WTC11 (cell line): ENCODE measurements at regions of chr16 and their contacts with region 1.

Region 1: GRCh38 chr16:86252596-86252995 is 257.7 kb upstream of the FOXF1 start:
- DNase-seq: peak; percentile 77
- ATAC-seq: peak; percentile 83
- H3K4me3 Mint-ChIP-seq: no peak overlapping the region
- H3K27ac Mint-ChIP-seq: no peak overlapping the region
- H3K4me1 Mint-ChIP-seq: peaks cover 2% of the 10 kb centered on the region; the same call in 1 of the 2 replicates
- H3K27me3 Mint-ChIP-seq: no peaks in the 10 kb centered on the region; the same call in 1 of the 2 replicates
- CTCF ChIP-seq: peak; percentile 84

Region 2: GRCh38 chr16:85819245-85819644 is 433.4 kb before region 1 on chr16:
- CTCF ChIA-PET with region 1: no interaction called
- POLR2A ChIA-PET with region 1: no interaction called
- DNase-seq: peak; percentile 96
- ATAC-seq: peak; percentile 84
- H3K4me3 Mint-ChIP-seq: no peak overlapping the region
- H3K27ac Mint-ChIP-seq: no peak overlapping the region
- H3K4me1 Mint-ChIP-seq: peaks cover 4% of the 10 kb centered on the region; the same call in 1 of the 2 replicates
- H3K27me3 Mint-ChIP-seq: peaks cover 29% of the 10 kb centered on the region
- CTCF ChIP-seq: peak; percentile 80

Region 3: GRCh38 chr16:86242244-86243122 is 10.1 kb before region 1 on chr16:
- CTCF ChIA-PET with region 1: interaction called, 33 read pairs
- POLR2A ChIA-PET with region 1: no interaction called
- DNase-seq: no peak
- ATAC-seq: no peak
- H3K4me3 Mint-ChIP-seq: no peak overlapping the region
- H3K27ac Mint-ChIP-seq: peak overlapping the region; percentile 21; the same call in 1 of the 2 replicates
- H3K4me1 Mint-ChIP-seq: peaks cover 28% of the 10 kb centered on the region
- H3K27me3 Mint-ChIP-seq: peaks cover 3% of the 10 kb centered on the region; the same call in 1 of the 2 replicates
- CTCF ChIP-seq: no peak

Region 4: GRCh38 chr16:86277221-86277620 is 24.6 kb after region 1 on chr16:
- CTCF ChIA-PET with region 1: interaction called, 26 read pairs
- POLR2A ChIA-PET with region 1: no interaction called
- DNase-seq: peak; percentile 47
- ATAC-seq: peak; percentile 84
- H3K4me3 Mint-ChIP-seq: peak overlapping the region; percentile 10; the same call in 1 of the 2 replicates
- H3K27ac Mint-ChIP-seq: peak overlapping the region; percentile 93
- H3K4me1 Mint-ChIP-seq: peaks cover 65% of the 10 kb centered on the region
- H3K27me3 Mint-ChIP-seq: peaks cover 58% of the 10 kb centered on the region
- CTCF ChIP-seq: no peak

Region 5: GRCh38 chr16:86300746-86301481 is 48.3 kb after region 1 on chr16:
- CTCF ChIA-PET with region 1: interaction called, 14 read pairs
- POLR2A ChIA-PET with region 1: no interaction called
- DNase-seq: peak; percentile 36
- ATAC-seq: peak; percentile 64
- H3K4me3 Mint-ChIP-seq: peak overlapping the region; percentile 63
- H3K27ac Mint-ChIP-seq: peak overlapping the region; percentile 89
- H3K4me1 Mint-ChIP-seq: peaks cover 46% of the 10 kb centered on the region
- H3K27me3 Mint-ChIP-seq: peaks cover 43% of the 10 kb centered on the region
- CTCF ChIP-seq: no peak

Region 6: GRCh38 chr16:86355538-86355937 is 102.9 kb after region 1 on chr16:
- CTCF ChIA-PET with region 1: no interaction called
- POLR2A ChIA-PET with region 1: no interaction called
- DNase-seq: no peak
- ATAC-seq: no peak
- H3K4me3 Mint-ChIP-seq: no peak overlapping the region
- H3K27ac Mint-ChIP-seq: no peak overlapping the region
- H3K4me1 Mint-ChIP-seq: peaks cover 66% of the 10 kb centered on the region
- H3K27me3 Mint-ChIP-seq: peaks cover 12% of the 10 kb centered on the region
- CTCF ChIP-seq: no peak

Region 7: DNA sequence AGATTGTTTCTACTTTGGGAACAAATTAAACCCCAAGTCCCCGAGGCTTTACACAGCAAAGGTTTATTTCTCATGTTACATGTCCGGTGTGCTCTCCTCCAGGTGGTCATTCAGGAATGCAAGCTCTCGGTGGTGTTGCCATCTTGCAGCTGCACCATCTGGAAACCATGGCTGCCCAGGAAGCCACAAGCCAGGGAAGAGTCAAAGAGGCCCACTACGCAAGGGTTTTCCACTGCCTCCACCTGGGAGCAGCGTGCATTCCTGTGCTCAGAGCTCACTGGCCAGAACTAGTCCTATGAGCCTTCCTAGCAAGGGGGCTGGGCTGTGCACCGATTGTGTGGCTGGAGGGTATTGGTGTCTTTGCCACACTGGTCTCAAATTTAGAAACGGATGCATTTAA is 128.9 kb after region 1 on chr16:
- CTCF ChIA-PET with region 1: interaction called, 11 read pairs
- POLR2A ChIA-PET with region 1: no interaction called
- DNase-seq: no peak
- ATAC-seq: no peak
- H3K4me3 Mint-ChIP-seq: no peak overlapping the region
- H3K27ac Mint-ChIP-seq: no peak overlapping the region
- H3K4me1 Mint-ChIP-seq: peaks cover 30% of the 10 kb centered on the region
- H3K27me3 Mint-ChIP-seq: no peaks in the 10 kb centered on the region; the same call in 1 of the 2 replicates
- CTCF ChIP-seq: no peak

Region 8: GRCh38 chr16:86517652-86518258 is 265.2 kb after region 1 on chr16:
- CTCF ChIA-PET with region 1: interaction called, 64 read pairs
- POLR2A ChIA-PET with region 1: no interaction called
- DNase-seq: peak; percentile 77
- ATAC-seq: peak; percentile 46
- H3K4me3 Mint-ChIP-seq: no peak overlapping the region
- H3K27ac Mint-ChIP-seq: no peak overlapping the region
- H3K4me1 Mint-ChIP-seq: peaks cover 25% of the 10 kb centered on the region
- H3K27me3 Mint-ChIP-seq: peaks cover 86% of the 10 kb centered on the region
- CTCF ChIP-seq: peak; percentile 51; the same call in 1 of the 2 replicates